PC-9 (cell line): ENCODE measurements at regions of chr15 and their contacts with region 1.

Region 1: GRCh38 chr15:48905847-48906246 is 27.9 kb downstream of the EID1 start:
- DNase-seq: no peak
- H3K4me3 ChIP-seq: no peak overlapping the region
- H3K27ac ChIP-seq: no peak overlapping the region
- H3K4me1 ChIP-seq: no peaks in the 10 kb centered on the region
- H3K27me3 ChIP-seq: no peaks in the 10 kb centered on the region
- CTCF ChIP-seq: no peak

Region 2: DNA sequence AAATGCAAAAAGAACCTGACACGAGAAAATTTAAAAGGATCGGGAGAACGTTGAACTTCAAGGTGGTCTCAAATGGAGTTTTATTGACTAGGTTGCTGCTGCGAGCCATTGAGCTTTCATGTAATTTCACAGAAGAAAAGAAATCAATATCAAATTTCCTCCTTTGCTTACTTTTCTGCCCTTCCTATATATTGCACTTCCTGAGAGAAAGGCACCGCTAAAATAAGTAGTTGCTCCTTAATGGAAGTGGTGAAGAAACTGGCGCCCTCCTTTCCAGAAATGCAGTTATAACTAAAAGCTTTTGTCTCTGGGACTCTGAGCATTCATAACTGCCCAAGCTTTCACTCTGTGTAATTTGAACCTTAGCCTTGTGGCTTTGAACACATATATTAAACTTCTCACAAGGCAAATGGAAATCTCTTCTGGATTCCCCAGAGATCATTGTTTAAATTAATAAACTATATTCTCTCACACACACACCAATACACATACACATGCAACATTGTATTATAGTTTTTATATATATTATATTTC is 14.5 kb before region 1 on chr15:
- CTCF ChIA-PET with region 1: interaction called, 28 read pairs
- POLR2A ChIA-PET with region 1: no interaction called
- intact Hi-C with region 1: no loop called
- DNase-seq: no peak
- H3K4me3 ChIP-seq: no peak overlapping the region
- H3K27ac ChIP-seq: no peak overlapping the region
- H3K4me1 ChIP-seq: no peaks in the 10 kb centered on the region
- H3K27me3 ChIP-seq: no peaks in the 10 kb centered on the region
- CTCF ChIP-seq: no peak

Region 3: DNA sequence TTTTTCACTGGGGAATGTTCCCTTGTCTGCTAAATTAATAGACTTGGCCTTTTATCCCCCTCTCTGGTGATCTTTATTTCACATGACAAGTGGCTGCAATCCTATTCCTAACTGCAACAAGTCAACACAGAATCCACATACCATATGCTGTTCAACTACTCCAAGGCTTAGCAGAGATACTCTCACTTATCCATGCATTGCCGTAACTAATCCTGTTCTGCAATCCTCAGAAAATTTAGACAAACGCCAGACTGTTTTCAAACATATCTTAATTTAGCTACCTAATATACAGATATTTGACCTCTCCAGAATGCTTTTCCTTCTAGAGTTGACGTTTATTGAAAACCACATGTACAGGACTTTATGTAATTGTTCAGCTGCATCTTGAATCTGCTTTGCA is 10.0 kb after region 1 on chr15:
- CTCF ChIA-PET with region 1: no interaction called
- POLR2A ChIA-PET with region 1: no interaction called
- intact Hi-C with region 1: no loop called
- DNase-seq: no peak
- H3K4me3 ChIP-seq: no peak overlapping the region
- H3K27ac ChIP-seq: no peak overlapping the region
- H3K4me1 ChIP-seq: 0 out of 2 replicates have a peak, but pooled peaks cover 5% of the 10 kb centered on the region
- H3K27me3 ChIP-seq: no peaks in the 10 kb centered on the region
- CTCF ChIP-seq: no peak

Region 4: GRCh38 chr15:48928877-48929538 is 23.2 kb after region 1 on chr15:
- CTCF ChIA-PET with region 1: no interaction called
- POLR2A ChIA-PET with region 1: no interaction called
- intact Hi-C with region 1: no loop called
- DNase-seq: no peak
- H3K4me3 ChIP-seq: no peak overlapping the region
- H3K27ac ChIP-seq: no peak overlapping the region
- H3K4me1 ChIP-seq: peaks cover 8% of the 10 kb centered on the region; the same call in 1 of the 2 replicates
- H3K27me3 ChIP-seq: no peaks in the 10 kb centered on the region
- CTCF ChIP-seq: no peak

Region 5: GRCh38 chr15:48984811-48985352 is 79.0 kb after region 1 on chr15:
- CTCF ChIA-PET with region 1: no interaction called
- POLR2A ChIA-PET with region 1: no interaction called
- intact Hi-C with region 1: no loop called
- DNase-seq: no peak
- H3K4me3 ChIP-seq: no peak overlapping the region
- H3K27ac ChIP-seq: no peak overlapping the region
- H3K4me1 ChIP-seq: 0 out of 2 replicates have a peak, but pooled peaks cover 4% of the 10 kb centered on the region
- H3K27me3 ChIP-seq: no peaks in the 10 kb centered on the region
- CTCF ChIP-seq: no peak